Heart right ventricle (tissue), 16 donors: ENCODE measurements at regions of chr1 and their contacts with region 1.

Region 1: DNA sequence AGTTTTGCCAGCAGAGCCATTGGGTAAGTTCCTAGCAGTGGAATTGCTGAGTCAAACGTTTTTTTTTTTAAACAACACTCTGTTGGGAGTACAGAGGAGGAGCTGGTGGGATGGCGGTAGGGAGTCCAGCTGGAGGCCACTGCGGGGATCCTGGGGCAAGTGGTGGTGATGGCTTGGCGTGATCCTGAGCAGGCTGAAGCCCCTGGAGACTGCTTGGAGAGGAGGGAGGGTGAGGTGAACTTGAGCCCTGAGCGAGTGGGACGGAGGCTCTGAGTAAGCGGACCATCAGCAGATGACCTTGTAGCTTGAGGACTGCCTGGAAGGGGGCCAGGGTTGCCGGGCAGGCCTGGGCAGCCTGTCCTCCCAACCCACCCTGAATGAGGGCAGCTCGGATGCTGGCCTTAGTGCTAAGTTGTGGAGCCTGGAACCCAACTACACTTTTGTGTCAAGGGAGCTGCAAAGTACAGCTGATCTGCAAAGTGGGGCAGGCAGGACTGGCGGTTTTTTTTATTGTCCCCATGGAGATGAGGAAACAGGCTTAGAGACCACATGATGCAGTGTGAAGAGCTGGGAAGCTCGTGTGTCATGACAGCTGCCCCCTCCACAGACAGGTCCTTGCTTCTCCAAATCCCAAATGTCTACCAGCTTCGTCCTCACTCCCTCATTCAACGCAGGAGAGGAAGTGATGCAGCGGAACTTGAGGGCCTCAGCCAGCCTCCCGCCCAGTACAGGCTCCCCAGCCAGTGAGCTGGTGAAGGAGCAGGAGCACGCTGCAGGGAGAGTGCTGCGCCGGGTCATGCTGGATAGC is 20.2 kb downstream of the MRPL37 start:
- DNase-seq: peak; percentile 68 to 69
- ATAC-seq: peak; percentile 62 to 84 (median 77)
- H3K4me3 ChIP-seq: peak overlapping the region in 5 of 10 donors; percentile 13 to 25 (median 21)
- H3K27ac ChIP-seq: peak overlapping the region in 9 of 10 donors; percentile 9 to 71 (median 59)
- H3K4me1 ChIP-seq: peaks cover 6 to 39% (median 28%) of the 10 kb centered on the region in 9 donors
- H3K27me3 ChIP-seq: no peaks in the 10 kb centered on the region
- CTCF ChIP-seq: no peak

Region 2: DNA sequence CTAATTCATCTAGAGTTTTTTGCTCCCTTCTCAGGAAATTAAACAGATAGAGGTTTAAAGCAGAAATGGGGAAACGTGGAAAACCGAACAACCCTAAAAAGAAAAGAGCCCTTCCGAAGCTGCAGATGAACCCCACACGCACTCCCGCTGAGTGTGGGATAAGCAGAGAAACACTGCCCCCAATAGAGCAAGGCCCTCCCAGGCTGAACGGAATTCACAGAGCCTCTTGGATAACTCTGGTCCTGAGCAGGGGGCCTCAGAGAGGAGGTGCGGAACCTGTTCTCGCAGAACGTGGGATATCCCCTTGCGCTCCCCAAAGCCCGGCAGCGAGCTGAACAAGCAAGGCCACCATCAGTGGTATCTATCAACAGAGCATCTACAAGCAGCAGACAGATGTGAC is 141.1 kb after region 1 on chr1:
- intact Hi-C with region 1: loop called in 1 of 10 experiments (anchors 5 kb)
- DNase-seq: no peak
- ATAC-seq: no peak
- H3K4me3 ChIP-seq: no peak overlapping the region
- H3K27ac ChIP-seq: peak overlapping the region in 1 of 10 donors; percentile 87
- H3K4me1 ChIP-seq: peaks cover 8 to 91% (median 61%) of the 10 kb centered on the region in 9 donors
- H3K27me3 ChIP-seq: no peaks in the 10 kb centered on the region
- CTCF ChIP-seq: peak in 5 of 9 donors; percentile 15 to 52 (median 32)